ENCODE measurements at regions of chr2 and their contacts with region 1.

Region 1: DNA sequence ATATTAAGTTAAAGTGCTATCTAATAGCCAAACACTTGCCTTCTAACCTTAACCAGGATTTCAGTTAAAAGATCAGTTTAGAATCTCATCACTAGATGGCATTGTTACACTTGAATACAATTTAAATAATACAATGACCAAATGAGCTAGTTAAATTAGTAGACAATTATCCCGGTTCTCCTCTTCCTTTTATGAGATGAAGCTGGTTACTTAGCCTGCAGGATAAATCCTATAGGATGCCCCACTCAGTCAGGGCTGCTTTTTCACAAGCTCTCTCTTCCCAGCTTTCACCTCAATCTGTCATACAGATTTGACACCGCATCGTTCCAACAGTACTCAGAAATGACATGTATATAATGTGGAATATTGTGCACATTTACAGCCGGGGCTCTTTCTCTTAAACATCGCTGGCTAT is 678.8 kb downstream of the KCNJ3 start:
- DNase-seq: no peak
- H3K4me3 Mint-ChIP-seq: no peak overlapping the region
- H3K27ac Mint-ChIP-seq: peak overlapping the region; percentile 36
- H3K4me1 Mint-ChIP-seq: peaks cover 8% of the 10 kb centered on the region
- H3K27me3 Mint-ChIP-seq: no peaks in the 10 kb centered on the region

Region 2: DNA sequence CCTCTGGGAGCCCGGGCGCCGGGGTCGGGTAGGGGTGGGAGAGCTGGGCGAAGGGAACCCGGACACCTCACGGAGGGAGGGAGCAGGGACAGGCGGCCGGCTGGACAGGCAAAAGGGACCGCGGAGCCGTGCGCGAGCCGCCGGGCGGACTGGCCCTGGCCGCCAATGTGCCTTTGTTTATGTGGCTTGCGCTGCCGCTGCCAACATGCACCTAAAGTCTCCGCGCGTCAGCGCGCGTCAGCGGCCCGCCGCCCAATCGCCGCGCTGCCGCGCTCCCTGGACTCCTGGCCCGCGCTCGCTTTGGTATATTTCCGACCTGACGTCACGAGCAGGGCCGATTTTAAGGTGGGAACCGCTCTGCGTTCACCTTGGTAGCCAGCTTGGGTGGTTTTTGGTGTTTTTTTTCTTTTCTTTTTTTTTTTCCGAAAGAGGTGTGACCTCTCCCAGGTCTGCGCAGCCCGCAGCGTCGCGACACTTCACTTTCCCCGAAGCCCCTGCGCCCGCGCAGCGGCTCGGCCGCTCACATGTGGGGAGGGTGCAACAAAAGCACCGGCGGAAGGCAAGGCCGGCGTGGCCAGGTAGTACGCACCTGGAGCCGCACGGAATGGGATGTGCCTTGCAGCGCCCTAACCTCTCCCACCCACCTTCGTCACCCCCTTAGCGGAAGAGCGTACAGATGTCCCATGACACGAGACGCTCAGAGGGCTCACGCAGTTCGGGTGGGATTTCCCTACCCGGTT is 955.4 kb after region 1 on chr2 and contains the start of gene NR4A2:
- intact Hi-C with region 1: loop called (anchors 5 kb)
- DNase-seq: peak; percentile 96
- H3K4me3 Mint-ChIP-seq: peak within 1 kb of the TSS; percentile 81
- H3K27ac Mint-ChIP-seq: peak within 1 kb of the TSS; percentile 99
- H3K4me1 Mint-ChIP-seq: peaks cover 50% of the 10 kb centered on the region
- H3K27me3 Mint-ChIP-seq: peaks cover 7% of the 10 kb centered on the region
- total RNA-seq, gene NR4A2: 13.2 and 14.1 TPM in 2 replicates

Region 3: GRCh38 chr2:156589381-156590079 is 1212.3 kb after region 1 on chr2:
- intact Hi-C with region 1: loop called (anchors 2 kb)
- DNase-seq: peak; percentile 64
- H3K4me3 Mint-ChIP-seq: no peak overlapping the region
- H3K27ac Mint-ChIP-seq: no peak overlapping the region
- H3K4me1 Mint-ChIP-seq: peaks cover 8% of the 10 kb centered on the region
- H3K27me3 Mint-ChIP-seq: no peaks in the 10 kb centered on the region

Region 4: DNA sequence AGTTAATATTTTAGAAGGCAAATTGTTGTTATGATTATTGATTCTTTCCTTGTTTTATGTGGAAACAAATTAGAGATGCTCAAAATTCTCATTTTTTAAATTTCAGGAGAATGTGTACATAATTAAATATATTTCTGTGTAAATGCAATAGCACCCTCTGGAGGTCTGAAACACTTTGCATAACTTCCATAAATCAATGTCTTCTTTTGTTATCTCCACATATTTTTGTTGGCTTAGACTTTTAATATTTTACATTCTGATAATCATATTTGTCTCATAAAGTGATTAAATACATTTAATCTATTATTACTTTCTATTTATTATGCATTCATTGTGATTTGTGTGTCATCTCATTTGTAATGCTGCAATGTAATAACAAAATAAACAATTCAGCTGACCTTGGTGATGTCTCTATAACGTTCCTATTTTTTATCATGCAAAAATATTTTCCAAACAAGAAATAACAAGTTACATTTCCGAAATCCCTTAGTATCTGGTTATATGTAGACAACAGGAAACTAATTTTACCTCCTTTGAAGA is 1678.5 kb after region 1 on chr2:
- intact Hi-C with region 1: loop called (anchors 10 kb)
- DNase-seq: no peak
- H3K4me3 Mint-ChIP-seq: no peak overlapping the region
- H3K27ac Mint-ChIP-seq: no peak overlapping the region
- H3K4me1 Mint-ChIP-seq: no peaks in the 10 kb centered on the region
- H3K27me3 Mint-ChIP-seq: peaks cover 11% of the 10 kb centered on the region

Measured in activated CD4-positive, alpha-beta T cell treated with anti-CD3 and anti-CD28 coated beads, Interleukin-2, amount 10 ng/mL, durations not matched to agents 24 days and 14 days (primary cell).